Activated CD4-positive, alpha-beta memory T cell treated with anti-CD3 and anti-CD28 coated beads, Interleukin-2, amount 10 ng/mL, durations not matched to agents 7 days and 5 days (primary cell): ENCODE measurements at regions of chr19 and their contacts with region 1.

Region 1: DNA sequence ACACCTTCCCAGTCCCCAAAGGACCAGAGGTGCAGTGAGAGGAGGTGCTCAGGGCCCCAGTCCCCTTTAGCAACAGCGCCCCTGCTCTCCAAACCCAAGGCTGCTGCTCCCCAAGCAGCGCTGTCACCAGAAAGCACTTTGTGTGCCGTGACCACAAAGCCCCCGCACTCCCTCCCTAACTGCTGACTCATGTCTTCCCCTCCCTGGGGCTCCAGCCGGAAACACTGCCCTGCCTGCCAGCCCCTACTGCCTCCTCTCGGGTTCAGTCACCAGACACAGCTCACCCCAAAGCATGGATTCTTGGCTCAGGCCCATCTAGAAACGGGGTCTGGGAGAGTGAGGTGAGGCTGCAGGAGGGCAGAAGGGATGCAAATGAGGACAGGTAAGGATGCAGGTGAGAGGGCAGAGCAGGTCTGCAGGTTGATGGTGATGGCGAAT is 4.9 kb upstream of the TNFSF14 start:
- DNase-seq: peak; percentile 94
- H3K4me3 Mint-ChIP-seq: peak overlapping the region; percentile 66
- H3K27ac Mint-ChIP-seq: peak overlapping the region; percentile 81
- H3K4me1 Mint-ChIP-seq: peaks cover 70% of the 10 kb centered on the region
- H3K27me3 Mint-ChIP-seq: peaks cover 8% of the 10 kb centered on the region

Region 2: GRCh38 chr19:6660930-6661329 is 14.0 kb before region 1 on chr19:
- CTCF ChIA-PET with region 1: interaction called, 6 read pairs
- POLR2A ChIA-PET with region 1: interaction called, 66 read pairs
- DNase-seq: no peak
- H3K4me3 Mint-ChIP-seq: no peak overlapping the region
- H3K27ac Mint-ChIP-seq: peak overlapping the region; percentile 7
- H3K4me1 Mint-ChIP-seq: peaks cover 25% of the 10 kb centered on the region
- H3K27me3 Mint-ChIP-seq: no peaks in the 10 kb centered on the region

Region 3: GRCh38 chr19:6730153-6730825 is 55.4 kb after region 1 on chr19:
- CTCF ChIA-PET with region 1: no interaction called
- POLR2A ChIA-PET with region 1: no interaction called
- DNase-seq: peak; percentile 43
- H3K4me3 Mint-ChIP-seq: no peak overlapping the region
- H3K27ac Mint-ChIP-seq: no peak overlapping the region
- H3K4me1 Mint-ChIP-seq: peaks cover 7% of the 10 kb centered on the region
- H3K27me3 Mint-ChIP-seq: no peaks in the 10 kb centered on the region